ENCODE measurements at regions of chr10 and their contacts with region 1.

Region 1: DNA sequence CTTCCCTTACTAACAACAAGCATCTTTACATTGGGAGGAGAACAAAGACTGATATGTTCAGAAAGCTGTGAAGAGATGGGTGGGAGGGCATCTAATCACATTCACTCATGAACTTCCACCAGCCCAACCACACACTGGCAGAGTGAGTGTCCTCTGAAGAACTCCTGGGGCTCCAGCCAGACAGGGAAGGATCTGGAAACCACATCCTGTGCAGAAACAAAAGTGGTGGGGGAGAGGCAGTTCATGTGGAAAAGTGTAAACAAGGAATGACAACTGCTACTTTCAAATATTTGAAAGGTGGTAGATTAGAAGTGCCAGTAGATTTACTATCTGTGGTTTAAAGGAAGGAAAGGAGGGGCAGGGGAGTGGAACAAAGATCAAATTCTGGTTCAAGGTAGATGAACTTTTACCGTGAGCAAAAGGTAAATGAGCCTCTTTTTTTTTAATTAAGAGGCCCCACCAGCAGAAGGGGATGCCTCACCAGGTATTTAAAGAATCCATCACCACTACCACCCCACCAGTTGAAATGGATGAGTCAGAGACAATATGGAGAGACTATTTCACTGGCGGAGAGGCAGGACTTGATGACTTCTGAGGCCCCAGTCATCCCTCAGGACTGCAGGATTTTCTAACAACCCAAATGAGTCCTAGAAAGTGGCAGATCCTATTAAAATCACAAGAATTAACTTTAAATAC is 34.5 kb downstream of the GOT1 start:
- DNase-seq: no peak
- H3K4me3 ChIP-seq: no peak overlapping the region
- H3K27ac ChIP-seq: no peak overlapping the region
- H3K4me1 ChIP-seq: no peaks in the 10 kb centered on the region
- H3K27me3 ChIP-seq: no peaks in the 10 kb centered on the region
- CTCF ChIP-seq: no peak
- POLR2A ChIP-seq: no peak

Region 2: GRCh38 chr10:97714048-97714371 is 1681.9 kb before region 1 on chr10:
- intact Hi-C with region 1: no loop called
- DNase-seq: peak; percentile 75 to 86 (median 79)
- H3K4me3 ChIP-seq: peak overlapping the region in 3 of 4 donors; percentile 9 to 52 (median 42)
- H3K27ac ChIP-seq: peak overlapping the region; percentile 20 to 89 (median 72)
- H3K4me1 ChIP-seq: peaks cover 0 to 25% of the 10 kb centered on the region in 2 donors
- H3K27me3 ChIP-seq: no peaks in the 10 kb centered on the region
- CTCF ChIP-seq: peak in 4 of 6 experiments; percentile 1 to 33 (median 10)
- POLR2A ChIP-seq: peak in 1 of 2 donors; percentile 50

Region 3: DNA sequence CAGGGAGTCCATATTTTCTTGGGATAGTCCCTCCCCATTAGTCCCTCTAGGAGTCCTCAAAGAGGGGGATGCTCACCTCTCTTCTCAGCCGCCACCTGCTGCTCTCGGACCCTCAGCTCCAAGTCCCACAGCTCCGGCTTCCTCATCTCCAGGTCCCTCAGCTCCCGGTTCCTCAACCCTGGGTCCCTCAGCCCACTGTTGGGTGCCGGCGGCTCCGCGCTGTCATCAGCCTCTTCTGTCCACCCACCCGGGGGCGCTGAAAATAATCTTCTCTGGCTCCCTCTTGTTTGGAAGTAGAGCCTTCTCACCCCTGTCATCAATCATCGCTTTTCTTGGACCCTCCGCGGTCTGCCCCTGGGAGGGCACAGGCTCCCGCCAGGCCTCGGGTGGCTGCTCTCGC is 80.0 kb before region 1 on chr10:
- intact Hi-C with region 1: no loop called
- DNase-seq: no peak
- H3K4me3 ChIP-seq: no peak overlapping the region
- H3K27ac ChIP-seq: no peak overlapping the region
- H3K4me1 ChIP-seq: no peaks in the 10 kb centered on the region
- H3K27me3 ChIP-seq: no peaks in the 10 kb centered on the region
- CTCF ChIP-seq: no peak
- POLR2A ChIP-seq: no peak

Region 4: DNA sequence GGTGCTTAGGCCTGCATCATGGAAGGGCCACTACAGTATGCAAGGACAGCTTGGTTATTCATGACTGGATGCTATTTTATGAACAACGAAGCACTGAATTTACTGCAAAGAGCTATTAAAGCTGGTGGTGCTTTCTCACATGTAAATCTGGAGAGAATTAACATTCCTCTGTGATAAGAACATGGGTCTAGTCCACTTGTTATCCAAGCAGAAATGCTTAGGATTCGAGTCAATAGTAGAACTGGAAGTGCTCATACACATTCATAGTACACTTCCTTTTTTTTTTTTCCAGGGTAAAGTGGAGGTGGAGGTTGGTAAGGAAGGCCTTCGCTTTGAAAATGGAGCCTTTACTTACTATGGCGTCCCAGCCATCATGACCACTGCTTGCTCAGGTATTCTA is 31.8 kb before region 1 on chr10:
- intact Hi-C with region 1: no loop called
- DNase-seq: no peak
- H3K4me3 ChIP-seq: no peak overlapping the region
- H3K27ac ChIP-seq: no peak overlapping the region
- H3K4me1 ChIP-seq: no peaks in the 10 kb centered on the region
- H3K27me3 ChIP-seq: no peaks in the 10 kb centered on the region
- CTCF ChIP-seq: no peak
- POLR2A ChIP-seq: no peak

Region 5: DNA sequence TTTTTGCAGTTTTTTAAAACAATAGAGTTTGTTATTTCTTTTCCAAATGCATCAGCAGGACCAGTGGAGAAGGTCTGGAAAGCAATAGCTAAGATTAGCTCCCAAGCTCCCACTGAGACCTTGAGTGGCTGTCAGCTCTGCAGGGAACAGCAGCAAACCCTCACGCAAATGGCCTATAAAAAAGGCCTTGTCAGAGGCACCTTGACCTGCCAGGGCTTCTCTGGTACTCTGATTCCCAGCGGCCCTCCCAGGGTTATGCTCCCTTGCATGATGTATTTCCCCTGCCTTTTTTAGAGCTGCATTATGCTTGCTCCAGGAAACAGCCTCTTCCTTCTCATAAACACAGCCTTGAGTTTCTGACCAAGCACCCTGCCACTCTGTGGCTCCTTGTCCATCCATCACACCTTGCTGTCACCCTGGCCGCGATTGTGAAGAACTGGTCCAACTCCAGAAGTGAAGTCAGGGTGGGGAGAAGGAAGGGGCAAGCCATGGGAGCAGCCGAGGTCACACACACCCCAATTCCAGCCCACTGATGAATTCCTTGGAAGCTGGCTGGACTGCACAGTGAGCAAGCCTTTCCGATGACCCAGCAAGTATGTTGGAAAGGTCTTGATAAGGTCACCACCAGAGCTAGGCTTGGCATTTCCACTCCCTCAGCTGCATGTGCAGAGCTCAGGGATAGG is 101.6 kb after region 1 on chr10:
- intact Hi-C with region 1: no loop called
- DNase-seq: no peak
- H3K4me3 ChIP-seq: no peak overlapping the region
- H3K27ac ChIP-seq: no peak overlapping the region
- H3K4me1 ChIP-seq: no peaks in the 10 kb centered on the region
- H3K27me3 ChIP-seq: no peaks in the 10 kb centered on the region
- CTCF ChIP-seq: no peak
- POLR2A ChIP-seq: no peak

Region 6: GRCh38 chr10:99612167-99612831 is 216.4 kb after region 1 on chr10:
- intact Hi-C with region 1: loop called (anchors 5 to 10 kb)
- DNase-seq: peak in 3 of 7 donors; percentile 33 to 34 (median 33)
- H3K4me3 ChIP-seq: no peak overlapping the region
- H3K27ac ChIP-seq: no peak overlapping the region
- H3K4me1 ChIP-seq: peaks cover 10% of the 10 kb centered on the region in 2 donors
- H3K27me3 ChIP-seq: no peaks in the 10 kb centered on the region
- CTCF ChIP-seq: peak; percentile 73 to 83 (median 76)
- POLR2A ChIP-seq: no peak